SK-N-SH (cell line): ENCODE measurements at regions of chr17 and their contacts with region 1.

Region 1: DNA sequence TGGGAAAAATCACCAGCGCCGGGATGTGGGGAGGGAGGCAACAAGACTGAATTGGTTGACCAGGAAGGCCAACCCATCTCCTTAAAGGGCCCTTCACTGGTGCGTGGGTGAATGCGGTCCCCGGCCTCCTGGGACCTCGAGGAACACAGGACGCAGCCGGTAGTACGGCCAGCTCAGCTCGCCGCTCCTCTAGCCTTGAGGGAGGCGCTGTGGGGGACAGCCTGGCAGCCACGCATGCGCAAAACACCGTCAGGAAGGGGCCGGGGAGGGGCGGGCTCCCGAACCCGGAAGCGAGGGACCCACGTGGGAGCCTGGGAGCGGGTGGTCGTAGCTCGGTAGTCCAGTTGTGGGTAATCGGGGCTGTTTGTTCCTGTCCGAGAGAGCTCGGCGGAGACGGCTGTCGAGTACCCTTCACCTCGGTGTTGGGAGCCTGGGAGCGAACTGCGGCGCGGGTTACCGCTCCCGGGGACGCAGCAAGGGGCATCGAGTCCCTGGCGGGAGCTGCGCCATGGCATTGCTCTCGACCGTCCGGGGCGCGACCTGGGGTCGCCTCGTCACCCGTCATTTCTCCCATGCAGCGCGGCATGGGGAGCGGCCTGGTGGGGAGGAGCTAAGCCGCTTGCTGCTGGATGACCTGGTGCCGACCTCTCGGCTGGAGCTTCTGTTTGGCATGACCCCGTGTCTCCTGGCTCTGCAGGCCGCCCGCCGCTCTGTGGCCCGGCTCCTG is at the start of gene MRM1:
- DNase-seq: peak; percentile 98
- H3K4me3 ChIP-seq: peak within 1 kb of the TSS; percentile 85 to 90
- H3K27ac ChIP-seq: peak within 1 kb of the TSS; percentile 76 to 78
- H3K4me1 ChIP-seq: peaks cover 0 to 21% of the 10 kb centered on the region in 2 experiments; a peak in 2 of 4 replicates
- H3K27me3 ChIP-seq: no peaks in the 10 kb centered on the region
- CTCF ChIP-seq: peak; percentile 25
- EP300 ChIP-seq: no peak
- RAD21 ChIP-seq: no peak; the same call in 1 of the 2 replicates
- polyA plus RNA-seq, gene MRM1: 9.8 and 10.9 TPM in 2 replicates

Region 2: DNA sequence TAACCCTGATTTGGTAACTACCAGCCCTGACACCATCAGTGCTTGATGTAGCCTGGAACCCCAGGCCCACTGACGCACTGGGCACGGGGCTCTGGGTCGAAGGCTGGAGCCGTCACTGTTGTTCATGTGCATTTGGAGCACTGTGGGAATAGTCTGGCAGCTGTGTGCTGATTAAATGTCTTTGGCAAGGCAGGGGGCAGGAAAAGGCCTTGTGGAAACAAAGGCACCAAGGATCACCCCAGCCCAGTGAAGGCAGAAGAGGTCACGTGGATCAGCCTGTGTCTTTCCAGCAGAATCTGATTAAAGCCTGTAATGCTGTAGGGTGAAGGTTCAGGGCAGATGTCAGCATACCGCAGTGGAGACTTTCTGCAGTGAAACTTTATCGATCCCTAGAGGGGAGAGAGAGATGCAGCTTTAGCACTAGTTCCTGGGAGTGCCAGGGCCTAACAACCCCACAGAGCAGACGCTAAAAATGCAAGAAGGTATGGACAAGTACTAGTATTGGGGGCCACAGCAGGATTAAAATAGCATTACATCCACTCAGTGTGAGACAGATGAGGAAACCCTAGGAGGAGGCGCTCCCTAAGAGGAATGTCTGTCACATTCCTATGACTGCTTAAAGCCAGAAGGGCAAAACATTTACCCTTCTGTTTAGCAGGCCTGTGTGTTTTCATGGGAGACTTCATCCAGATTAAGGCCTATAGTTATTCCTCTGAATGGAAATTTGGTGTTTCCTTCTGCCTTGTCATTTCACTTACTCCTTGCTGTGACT is 105.3 kb before region 1 on chr17:
- CTCF ChIA-PET with region 1: no interaction called
- POLR2A ChIA-PET with region 1: no interaction called
- DNase-seq: no peak
- H3K4me3 ChIP-seq: no peak overlapping the region
- H3K27ac ChIP-seq: no peak overlapping the region; a peak in 1 of 4 replicates
- H3K4me1 ChIP-seq: peaks cover 0 to 22% of the 10 kb centered on the region in 2 experiments; a peak in 1 of 4 replicates
- H3K27me3 ChIP-seq: no peaks in the 10 kb centered on the region
- CTCF ChIP-seq: no peak
- EP300 ChIP-seq: no peak
- RAD21 ChIP-seq: no peak

Region 3: GRCh38 chr17:36586138-36586537 is 15.3 kb before region 1 on chr17:
- CTCF ChIA-PET with region 1: interaction called, 26 read pairs
- POLR2A ChIA-PET with region 1: interaction called, 16 read pairs
- DNase-seq: no peak
- H3K4me3 ChIP-seq: no peak overlapping the region
- H3K27ac ChIP-seq: no peak overlapping the region
- H3K4me1 ChIP-seq: peaks cover 0 to 1% of the 10 kb centered on the region in 2 experiments; a peak in 1 of 4 replicates
- H3K27me3 ChIP-seq: no peaks in the 10 kb centered on the region
- CTCF ChIP-seq: no peak
- EP300 ChIP-seq: no peak
- RAD21 ChIP-seq: no peak

Region 4: DNA sequence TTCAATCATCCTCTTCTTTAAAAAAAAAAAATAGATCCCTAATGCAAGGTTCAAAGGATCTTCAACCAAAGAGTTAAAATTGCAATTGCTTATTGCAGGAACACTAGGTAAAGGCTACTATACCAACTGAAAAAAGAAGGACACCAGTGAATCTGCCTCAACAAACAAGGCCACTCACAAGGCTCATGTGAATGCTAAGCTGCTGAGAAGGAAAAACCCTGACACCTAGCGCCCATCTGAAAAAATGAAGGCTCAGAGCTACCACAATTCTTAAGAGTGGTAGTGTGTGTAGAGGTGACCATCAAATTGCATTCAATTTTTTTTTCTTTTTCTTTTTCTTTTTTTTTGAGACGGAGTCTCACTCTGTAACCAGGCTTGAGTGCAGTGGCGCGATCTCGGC is 572.7 kb after region 1 on chr17:
- CTCF ChIA-PET with region 1: interaction called, 15 read pairs
- POLR2A ChIA-PET with region 1: interaction called, 3 read pairs
- DNase-seq: peak; percentile 61
- H3K4me3 ChIP-seq: no peak overlapping the region
- H3K27ac ChIP-seq: no peak overlapping the region
- H3K4me1 ChIP-seq: peaks cover 0 to 14% of the 10 kb centered on the region in 2 experiments; a peak in 3 of 4 replicates
- H3K27me3 ChIP-seq: no peaks in the 10 kb centered on the region
- CTCF ChIP-seq: peak; percentile 42
- EP300 ChIP-seq: no peak
- RAD21 ChIP-seq: peak; percentile 91

Region 5: GRCh38 chr17:37239690-37240334 is 638.3 kb after region 1 on chr17:
- CTCF ChIA-PET with region 1: interaction called, 43 read pairs
- POLR2A ChIA-PET with region 1: no interaction called
- DNase-seq: peak; percentile 33
- H3K4me3 ChIP-seq: no peak overlapping the region
- H3K27ac ChIP-seq: no peak overlapping the region
- H3K4me1 ChIP-seq: no peaks in the 10 kb centered on the region
- H3K27me3 ChIP-seq: no peaks in the 10 kb centered on the region
- CTCF ChIP-seq: peak; percentile 88
- EP300 ChIP-seq: no peak
- RAD21 ChIP-seq: peak; percentile 78